ENCODE measurements at regions of chr2 and their contacts with region 1.

Region 1: GRCh38 chr2:64831134-64831976 is 157.8 kb upstream of the SLC1A4 start:
- DNase-seq: peak; percentile 87
- H3K4me3 Mint-ChIP-seq: no peak overlapping the region
- H3K27ac Mint-ChIP-seq: no peak overlapping the region
- H3K4me1 Mint-ChIP-seq: peaks cover 21% of the 10 kb centered on the region
- H3K27me3 Mint-ChIP-seq: peaks cover 17% of the 10 kb centered on the region

Region 2: GRCh38 chr2:64653349-64654062 is 177.8 kb before region 1 on chr2 and contains the start of gene SERTAD2:
- CTCF ChIA-PET with region 1: interaction called, 53 read pairs
- DNase-seq: peak; percentile 91
- H3K4me3 Mint-ChIP-seq: peak within 1 kb of the TSS; percentile 82
- H3K27ac Mint-ChIP-seq: peak within 1 kb of the TSS; percentile 87
- H3K4me1 Mint-ChIP-seq: peaks cover 59% of the 10 kb centered on the region
- H3K27me3 Mint-ChIP-seq: peaks cover 9% of the 10 kb centered on the region

Region 3: DNA sequence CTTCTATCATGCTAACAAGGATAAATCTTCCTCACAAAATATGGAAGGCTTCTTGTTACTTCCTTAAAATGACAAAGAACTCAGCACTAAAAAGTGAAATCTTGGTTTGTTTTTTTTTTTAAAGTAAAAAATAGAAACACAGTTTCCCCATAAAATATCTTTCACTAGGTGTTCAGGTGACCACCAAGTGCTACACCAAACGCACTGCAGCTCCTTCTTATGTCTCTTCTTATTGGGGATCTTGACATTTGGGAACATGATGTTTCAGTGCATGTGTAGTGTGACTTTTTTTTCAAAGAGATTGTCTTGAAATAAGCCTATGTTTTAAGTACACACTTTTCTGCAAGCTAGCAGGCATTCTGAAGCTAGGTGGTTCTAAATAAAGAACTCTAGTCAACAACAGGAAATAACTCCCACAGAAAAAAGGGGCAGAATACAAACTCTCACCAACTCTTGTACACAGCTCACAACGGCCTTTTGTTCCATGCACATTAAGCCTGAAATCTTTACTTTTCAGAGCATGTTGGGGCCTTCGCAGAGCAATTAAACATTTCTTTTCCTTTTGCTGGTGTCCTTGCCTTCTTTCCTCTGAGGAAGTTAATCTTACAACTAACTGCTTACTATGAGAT is 164.4 kb before region 1 on chr2:
- CTCF ChIA-PET with region 1: no interaction called
- DNase-seq: no peak
- H3K4me3 Mint-ChIP-seq: peak overlapping the region; percentile 34
- H3K27ac Mint-ChIP-seq: peak overlapping the region; percentile 91
- H3K4me1 Mint-ChIP-seq: peaks cover 34% of the 10 kb centered on the region
- H3K27me3 Mint-ChIP-seq: no peaks in the 10 kb centered on the region

Region 4: DNA sequence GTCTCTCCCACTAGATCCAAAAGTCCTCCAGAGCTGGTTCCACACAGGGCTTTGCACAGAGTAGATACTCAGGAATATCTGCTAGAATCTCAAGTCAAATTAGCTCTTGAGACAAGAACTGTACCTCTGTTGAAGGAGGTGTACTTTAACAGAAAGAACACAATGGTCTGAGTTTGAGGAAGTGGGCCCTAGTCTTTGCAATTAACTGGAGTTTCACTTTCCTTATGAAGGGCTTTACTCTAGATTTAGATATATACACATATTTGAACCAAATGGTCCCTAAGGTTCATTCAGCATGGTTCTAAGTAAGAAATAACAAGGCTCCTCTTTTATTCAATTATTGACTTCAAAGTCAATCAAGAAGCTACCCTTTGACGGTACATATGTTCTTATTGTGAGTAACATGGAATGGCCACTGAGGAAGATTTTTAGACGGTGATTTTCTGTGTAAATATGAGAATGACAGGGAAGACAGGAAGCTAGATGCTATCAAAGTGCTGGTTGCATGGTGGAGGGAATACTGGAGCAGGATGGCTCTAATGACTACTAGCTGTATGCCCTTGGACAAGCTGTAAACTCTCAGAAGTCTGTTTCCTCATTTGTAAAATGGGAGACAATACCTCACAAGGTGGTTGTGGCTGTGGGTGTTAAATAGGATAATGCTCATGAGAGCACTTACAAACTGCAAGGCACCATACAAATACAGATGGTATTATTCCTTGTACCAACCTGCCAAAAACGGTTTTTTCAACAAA is 104.2 kb before region 1 on chr2:
- CTCF ChIA-PET with region 1: interaction called, 10 read pairs
- DNase-seq: no peak
- H3K4me3 Mint-ChIP-seq: peak overlapping the region; percentile 11
- H3K27ac Mint-ChIP-seq: peak overlapping the region; percentile 83
- H3K4me1 Mint-ChIP-seq: peaks cover 52% of the 10 kb centered on the region
- H3K27me3 Mint-ChIP-seq: no peaks in the 10 kb centered on the region

Region 5: GRCh38 chr2:64819774-64820696 is 11.3 kb before region 1 on chr2:
- CTCF ChIA-PET with region 1: interaction called, 19 read pairs
- DNase-seq: peak; percentile 65
- H3K4me3 Mint-ChIP-seq: peak overlapping the region; percentile 11
- H3K27ac Mint-ChIP-seq: peak overlapping the region; percentile 88
- H3K4me1 Mint-ChIP-seq: peaks cover 20% of the 10 kb centered on the region
- H3K27me3 Mint-ChIP-seq: no peaks in the 10 kb centered on the region